Caco-2 (cell line): ENCODE measurements at regions of chr1 and their contacts with region 1.

Region 1: GRCh38 chr1:40143891-40144575 is 17.2 kb upstream of the RLF start:
- DNase-seq: peak; percentile 52 to 70
- H3K4me3 ChIP-seq: no peak overlapping the region
- H3K4me3 Mint-ChIP-seq: peak overlapping the region; percentile 41
- H3K27ac Mint-ChIP-seq: peak overlapping the region; percentile 71
- H3K4me1 ChIP-seq: peaks cover 13% of the 10 kb centered on the region
- H3K4me1 Mint-ChIP-seq: peaks cover 19% of the 10 kb centered on the region
- H3K27me3 ChIP-seq: no peaks in the 10 kb centered on the region
- H3K27me3 Mint-ChIP-seq: no peaks in the 10 kb centered on the region
- CTCF ChIP-seq: peak; percentile 19 to 67

Region 2: GRCh38 chr1:39230261-39231190 is 913.5 kb before region 1 on chr1:
- CTCF ChIA-PET with region 1: no interaction called
- POLR2A ChIA-PET with region 1: no interaction called
- intact Hi-C with region 1: no loop called
- DNase-seq: no peak
- H3K4me3 ChIP-seq: no peak overlapping the region
- H3K4me3 Mint-ChIP-seq: no peak overlapping the region
- H3K27ac Mint-ChIP-seq: peak overlapping the region; percentile 20
- H3K4me1 ChIP-seq: no peaks in the 10 kb centered on the region
- H3K4me1 Mint-ChIP-seq: no peaks in the 10 kb centered on the region
- H3K27me3 ChIP-seq: no peaks in the 10 kb centered on the region
- H3K27me3 Mint-ChIP-seq: no peaks in the 10 kb centered on the region
- CTCF ChIP-seq: no peak

Region 3: GRCh38 chr1:39816415-39817090 is 327.5 kb before region 1 on chr1:
- CTCF ChIA-PET with region 1: no interaction called
- POLR2A ChIA-PET with region 1: no interaction called
- intact Hi-C with region 1: no loop called
- DNase-seq: peak; percentile 74 to 82
- H3K4me3 ChIP-seq: no peak overlapping the region
- H3K4me3 Mint-ChIP-seq: peak overlapping the region; percentile 62
- H3K27ac Mint-ChIP-seq: peak overlapping the region; percentile 90
- H3K4me1 ChIP-seq: peaks cover 7% of the 10 kb centered on the region
- H3K4me1 Mint-ChIP-seq: no peaks in the 10 kb centered on the region
- H3K27me3 ChIP-seq: no peaks in the 10 kb centered on the region
- H3K27me3 Mint-ChIP-seq: no peaks in the 10 kb centered on the region
- CTCF ChIP-seq: peak; percentile 52 to 67

Region 4: DNA sequence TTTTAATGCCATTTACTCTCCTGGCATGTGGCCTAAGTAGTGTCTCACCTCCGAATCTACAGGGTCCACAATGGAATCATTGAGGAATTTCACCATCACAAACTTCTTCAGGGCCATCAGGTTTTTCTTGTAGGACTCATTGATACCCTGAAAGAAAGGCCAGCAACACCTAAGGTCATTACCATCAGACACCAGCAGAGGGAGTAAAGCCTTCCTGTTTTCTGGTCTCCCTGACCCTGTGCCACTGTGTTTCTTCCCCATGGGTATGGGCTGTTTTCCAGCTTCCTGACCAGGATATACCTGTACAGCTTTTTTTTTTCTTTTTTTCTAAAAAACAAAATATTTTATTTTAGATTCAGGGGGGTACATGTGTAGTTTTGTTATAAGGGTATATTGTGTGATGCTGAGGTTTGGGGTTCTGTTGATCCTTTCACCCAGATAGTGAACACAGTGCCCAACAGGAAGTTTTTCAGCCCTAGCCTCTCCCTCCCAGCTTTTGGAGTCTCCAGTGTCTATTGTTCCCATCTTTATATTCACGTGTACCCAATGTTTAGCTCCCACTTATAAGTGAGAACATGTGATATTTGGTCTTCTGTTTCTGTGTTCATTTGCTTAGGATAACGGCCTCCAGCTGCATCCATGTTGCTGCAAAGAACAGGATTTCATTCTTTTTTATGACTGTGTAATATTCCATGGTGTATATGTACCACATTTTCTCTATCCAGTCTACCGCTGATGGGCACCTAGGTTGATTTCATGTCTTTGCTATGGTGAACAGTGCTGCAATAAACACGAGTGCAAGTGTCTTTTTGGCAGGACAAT is 65.3 kb before region 1 on chr1:
- CTCF ChIA-PET with region 1: interaction called, 6 read pairs
- POLR2A ChIA-PET with region 1: no interaction called
- intact Hi-C with region 1: loop called (anchors 10 kb)
- DNase-seq: peak; percentile 58 to 75
- H3K4me3 ChIP-seq: no peak overlapping the region
- H3K4me3 Mint-ChIP-seq: no peak overlapping the region
- H3K27ac Mint-ChIP-seq: no peak overlapping the region
- H3K4me1 ChIP-seq: no peaks in the 10 kb centered on the region
- H3K4me1 Mint-ChIP-seq: no peaks in the 10 kb centered on the region
- H3K27me3 ChIP-seq: no peaks in the 10 kb centered on the region
- H3K27me3 Mint-ChIP-seq: no peaks in the 10 kb centered on the region
- CTCF ChIP-seq: peak; percentile 62 to 70

Region 5: GRCh38 chr1:40130892-40131291 is 13.1 kb before region 1 on chr1:
- CTCF ChIA-PET with region 1: interaction called, 4 read pairs
- POLR2A ChIA-PET with region 1: no interaction called
- intact Hi-C with region 1: loop called (anchors 1 kb)
- DNase-seq: peak; percentile 52 to 63
- H3K4me3 ChIP-seq: no peak overlapping the region
- H3K4me3 Mint-ChIP-seq: peak overlapping the region; percentile 10
- H3K27ac Mint-ChIP-seq: peak overlapping the region; percentile 63
- H3K4me1 ChIP-seq: peaks cover 13% of the 10 kb centered on the region
- H3K4me1 Mint-ChIP-seq: peaks cover 8% of the 10 kb centered on the region
- H3K27me3 ChIP-seq: no peaks in the 10 kb centered on the region
- H3K27me3 Mint-ChIP-seq: no peaks in the 10 kb centered on the region
- CTCF ChIP-seq: no peak

Region 6: GRCh38 chr1:40404670-40405462 is 260.8 kb after region 1 on chr1:
- CTCF ChIA-PET with region 1: interaction called, 6 read pairs
- POLR2A ChIA-PET with region 1: no interaction called
- intact Hi-C with region 1: loop called (anchors 1 kb)
- DNase-seq: peak in 1 of 2 experiments; percentile 19
- H3K4me3 ChIP-seq: no peak overlapping the region
- H3K4me3 Mint-ChIP-seq: no peak overlapping the region
- H3K27ac Mint-ChIP-seq: no peak overlapping the region
- H3K4me1 ChIP-seq: no peaks in the 10 kb centered on the region
- H3K4me1 Mint-ChIP-seq: no peaks in the 10 kb centered on the region
- H3K27me3 ChIP-seq: no peaks in the 10 kb centered on the region
- H3K27me3 Mint-ChIP-seq: no peaks in the 10 kb centered on the region
- CTCF ChIP-seq: peak; percentile 54 to 61